ENCODE measurements at regions of chr2 and their contacts with region 1.

Region 1: GRCh38 chr2:237700512-237701032 is 73.2 kb downstream of the LRRFIP1 start:
- DNase-seq: peak; percentile 85
- H3K4me3 ChIP-seq: no peak overlapping the region
- H3K27ac ChIP-seq: peak overlapping the region; percentile 52
- H3K4me1 ChIP-seq: peaks cover 86% of the 10 kb centered on the region
- H3K27me3 ChIP-seq: no peaks in the 10 kb centered on the region
- CTCF ChIP-seq: no peak
- POLR2A ChIP-seq: no peak

Region 2: DNA sequence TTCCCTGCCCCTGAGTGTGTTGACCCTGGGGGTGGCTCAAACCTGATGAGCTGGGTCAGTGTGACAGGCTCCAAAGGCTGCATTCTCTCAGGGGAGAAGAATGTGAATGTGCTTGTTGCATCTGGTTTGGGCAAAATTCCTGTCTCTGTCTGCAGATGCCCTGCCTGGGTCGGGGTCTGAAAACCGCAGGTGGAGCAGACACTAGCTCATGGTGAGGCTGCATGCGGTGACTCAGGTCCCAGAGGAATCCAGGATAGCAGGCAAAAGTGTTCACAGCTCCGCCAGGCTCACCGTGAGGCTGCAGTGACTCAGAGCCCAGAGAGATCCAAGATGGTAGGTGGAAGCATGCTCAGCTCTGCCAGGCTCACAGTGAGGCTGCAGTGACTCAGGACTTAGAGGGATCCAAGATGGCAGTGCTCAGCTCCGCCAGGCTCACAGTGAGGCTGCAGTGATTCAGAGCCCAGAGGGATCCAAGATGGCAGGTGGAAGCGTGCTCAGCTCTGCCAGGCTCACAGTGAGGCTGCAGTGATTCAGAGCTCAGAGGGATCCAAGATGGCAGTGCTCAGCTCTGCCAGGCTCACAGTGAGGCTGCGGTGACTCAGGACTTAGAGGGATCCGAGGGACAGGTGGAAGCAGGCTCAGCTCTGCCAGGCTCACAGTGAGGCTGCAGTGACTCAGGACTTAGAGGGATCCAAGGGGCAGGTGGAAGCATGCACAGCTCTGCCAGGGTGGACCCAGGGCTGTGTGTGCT is 930.5 kb before region 1 on chr2:
- CTCF ChIA-PET with region 1: no interaction called
- POLR2A ChIA-PET with region 1: no interaction called
- dilution Hi-C with region 1: no loop called
- intact Hi-C with region 1: no loop called
- DNase-seq: no peak
- H3K4me3 ChIP-seq: no peak overlapping the region
- H3K27ac ChIP-seq: no peak overlapping the region
- H3K4me1 ChIP-seq: no peaks in the 10 kb centered on the region
- H3K27me3 ChIP-seq: peaks cover 0 to 2% of the 10 kb centered on the region in 2 experiments
- CTCF ChIP-seq: no peak
- POLR2A ChIP-seq: no peak

Region 3: DNA sequence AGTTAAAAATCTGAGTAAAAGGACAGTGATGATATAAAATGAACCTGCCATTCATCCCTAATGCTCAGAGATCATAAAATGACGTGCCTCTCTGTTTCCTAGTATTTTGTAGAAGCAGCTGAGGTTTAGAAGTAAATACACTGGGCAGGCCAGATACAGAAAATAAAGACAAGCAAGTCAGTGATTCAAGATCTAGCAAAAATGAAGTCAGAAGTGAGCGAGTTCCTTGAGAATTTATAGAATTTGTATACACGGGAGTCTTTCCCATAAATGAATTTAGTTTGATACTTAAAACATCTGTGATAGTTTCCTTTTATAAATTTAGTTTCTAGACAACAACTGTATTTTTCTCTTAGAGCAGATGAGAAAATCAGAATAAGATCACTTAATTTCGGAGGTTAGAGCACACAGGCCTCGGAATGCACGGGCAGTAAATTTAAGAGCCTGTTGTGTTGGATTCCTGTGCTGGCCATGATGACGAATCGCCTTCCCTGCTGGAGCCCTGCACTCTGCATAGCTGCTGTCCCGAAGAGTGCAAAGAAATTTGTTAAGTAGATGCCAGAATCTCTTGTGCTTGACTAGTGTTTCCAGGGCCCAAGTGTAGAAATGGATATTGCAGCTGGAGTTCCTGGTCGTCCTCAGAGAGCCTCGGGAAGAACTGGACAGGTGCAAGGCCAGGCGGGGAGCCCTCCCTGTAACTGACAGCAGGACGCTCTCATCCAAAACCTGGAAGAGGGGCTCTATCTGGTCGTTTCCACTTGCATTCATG is 14.3 kb after region 1 on chr2:
- CTCF ChIA-PET with region 1: interaction called, 12 read pairs
- POLR2A ChIA-PET with region 1: no interaction called
- dilution Hi-C with region 1: no loop called
- intact Hi-C with region 1: loop called (anchors 1 kb)
- DNase-seq: peak; percentile 60
- H3K4me3 ChIP-seq: peak overlapping the region in 1 of 3 experiments; percentile 34
- H3K27ac ChIP-seq: peak overlapping the region; percentile 57
- H3K4me1 ChIP-seq: peaks cover 26% of the 10 kb centered on the region
- H3K27me3 ChIP-seq: no peaks in the 10 kb centered on the region
- CTCF ChIP-seq: no peak
- POLR2A ChIP-seq: no peak

Region 4: DNA sequence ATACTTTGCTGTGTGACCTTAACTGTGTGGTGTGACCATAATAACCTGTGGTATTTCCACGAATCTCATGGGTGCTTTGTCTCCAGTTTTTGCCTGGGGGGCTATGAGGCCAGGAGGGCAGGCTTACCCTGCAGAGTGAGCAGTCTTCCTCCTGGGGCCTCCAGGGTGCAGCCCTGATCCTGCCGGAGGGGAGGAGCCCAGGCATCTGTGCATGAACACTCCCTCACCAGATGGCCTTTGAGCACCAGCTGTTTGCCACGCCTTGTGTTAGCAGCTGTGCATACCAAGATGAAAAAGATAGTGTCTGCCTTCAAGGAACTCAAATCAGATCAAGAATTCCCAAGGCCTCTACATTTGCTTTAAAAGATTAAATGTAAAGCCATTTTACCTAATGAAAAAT is 23.0 kb after region 1 on chr2:
- CTCF ChIA-PET with region 1: interaction called, 7 read pairs
- POLR2A ChIA-PET with region 1: interaction called, 3 read pairs
- dilution Hi-C with region 1: no loop called
- intact Hi-C with region 1: loop called (anchors 1 kb)
- DNase-seq: no peak
- H3K4me3 ChIP-seq: no peak overlapping the region
- H3K27ac ChIP-seq: no peak overlapping the region
- H3K4me1 ChIP-seq: peaks cover 34% of the 10 kb centered on the region
- H3K27me3 ChIP-seq: no peaks in the 10 kb centered on the region
- CTCF ChIP-seq: no peak
- POLR2A ChIP-seq: no peak

Region 5: GRCh38 chr2:237731663-237732062 is 31.1 kb after region 1 on chr2:
- CTCF ChIA-PET with region 1: interaction called, 14 read pairs
- POLR2A ChIA-PET with region 1: interaction called, 8 read pairs
- dilution Hi-C with region 1: no loop called
- intact Hi-C with region 1: loop called (anchors 1 kb)
- DNase-seq: peak; percentile 78
- H3K4me3 ChIP-seq: no peak overlapping the region
- H3K27ac ChIP-seq: peak overlapping the region; percentile 10
- H3K4me1 ChIP-seq: peaks cover 67% of the 10 kb centered on the region
- H3K27me3 ChIP-seq: no peaks in the 10 kb centered on the region
- CTCF ChIP-seq: no peak
- POLR2A ChIP-seq: no peak